Activated T-helper 1 cell treated with anti-CD3 and anti-CD28 coated beads, Interleukin-12 subunit alpha, Interleukin-12 subunit beta, Interleukin-2, Interleukin-4 antibody, amounts not matched to agents 30 ng/mL and 10 ng/mL and 1 ng/mL, durations not matched to agents 14 hours and 24 hours and 36 hours (primary cell): ENCODE measurements at regions of chr9 and their contacts with region 1.

Region 1: DNA sequence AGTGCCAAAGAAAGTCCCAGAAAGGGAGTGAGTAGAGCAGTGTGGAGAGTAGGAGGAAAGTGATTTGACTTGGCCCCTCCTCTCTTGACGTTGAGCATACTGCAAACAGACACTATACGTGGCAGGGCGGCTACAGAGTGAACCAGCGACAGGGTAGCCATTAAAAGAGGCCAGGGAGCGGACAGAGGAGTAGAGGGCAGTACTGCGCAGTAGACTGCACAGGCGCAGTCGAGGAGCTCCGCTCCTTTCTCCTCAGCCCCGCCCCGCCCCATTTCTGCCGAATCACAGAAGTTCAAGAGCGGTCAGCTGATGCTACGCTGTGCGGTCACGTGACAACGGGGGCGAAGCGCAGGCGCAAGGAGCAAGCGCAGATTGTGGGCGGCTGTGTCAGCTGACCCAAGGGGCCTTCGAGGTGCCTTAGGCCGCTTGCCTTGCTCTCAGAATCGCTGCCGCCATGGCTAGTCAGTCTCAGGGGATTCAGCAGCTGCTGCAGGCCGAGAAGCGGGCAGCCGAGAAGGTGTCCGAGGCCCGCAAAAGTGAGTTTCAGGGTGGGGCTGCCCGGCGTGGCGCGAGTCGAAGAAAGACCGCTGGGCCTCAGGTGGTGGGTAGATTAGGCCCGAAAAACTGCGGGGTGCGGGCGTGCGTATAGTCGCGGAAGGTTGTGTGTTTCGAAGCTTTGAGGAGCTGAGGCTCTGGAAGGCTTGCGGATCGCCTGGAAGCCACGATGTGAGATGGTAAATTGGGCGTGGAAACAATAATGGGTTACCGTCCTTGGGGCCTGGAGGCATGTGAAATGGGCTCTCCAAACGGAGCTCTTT is at the start of gene ATP6V1G1:
- DNase-seq: peak; percentile 99
- H3K4me3 Mint-ChIP-seq: peak within 1 kb of the TSS; percentile 97
- H3K27ac Mint-ChIP-seq: peak within 1 kb of the TSS; percentile 97
- H3K4me1 Mint-ChIP-seq: peaks cover 47% of the 10 kb centered on the region
- H3K27me3 Mint-ChIP-seq: peaks cover 6% of the 10 kb centered on the region
- total RNA-seq, gene ATP6V1G1: 57.2 and 61.0 TPM in 2 replicates

Region 2: GRCh38 chr9:114348906-114349482 is 238.6 kb before region 1 on chr9:
- intact Hi-C with region 1: loop called (anchors 1 kb)
- DNase-seq: peak; percentile 62
- H3K4me3 Mint-ChIP-seq: peak overlapping the region; percentile 72
- H3K27ac Mint-ChIP-seq: peak overlapping the region; percentile 97
- H3K4me1 Mint-ChIP-seq: peaks cover 56% of the 10 kb centered on the region
- H3K27me3 Mint-ChIP-seq: no peaks in the 10 kb centered on the region

Region 3: DNA sequence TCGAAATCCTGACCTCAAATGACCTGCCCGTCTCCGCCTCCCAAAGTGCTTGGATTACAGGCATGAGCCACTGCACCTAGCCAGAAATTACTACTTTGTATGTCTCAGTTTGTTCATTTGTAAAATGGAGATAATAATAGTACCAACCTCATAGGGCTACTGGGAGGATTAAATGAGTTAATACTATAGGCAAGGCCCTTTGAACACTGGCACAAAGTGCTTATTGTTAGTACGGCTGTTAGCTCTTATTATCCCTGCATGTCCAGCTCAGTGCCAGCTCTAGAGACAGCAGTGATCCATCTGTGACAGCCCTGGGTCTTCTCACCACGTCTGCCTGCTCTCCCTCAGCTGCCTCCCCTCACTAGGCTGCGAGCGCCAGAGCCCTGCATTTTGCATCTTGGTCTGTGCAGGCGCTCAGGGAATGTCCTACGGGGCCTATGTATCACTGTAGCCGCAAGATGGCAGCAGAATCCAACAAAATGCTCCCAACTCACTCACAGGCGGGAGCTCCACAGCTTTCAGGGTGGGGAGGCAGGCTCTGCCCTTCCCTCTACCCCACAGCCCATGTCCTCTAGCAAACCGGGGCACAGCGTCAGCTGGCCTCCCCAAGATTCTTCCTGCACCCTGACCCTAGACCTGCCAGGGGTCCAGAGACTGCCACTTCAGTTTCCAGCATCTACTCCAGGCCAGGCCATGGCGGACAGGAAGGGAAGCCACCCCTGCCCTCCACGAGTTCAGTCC is 182.1 kb before region 1 on chr9:
- intact Hi-C with region 1: loop called (anchors 1 kb)
- DNase-seq: peak; percentile 71
- H3K4me3 Mint-ChIP-seq: no peak overlapping the region
- H3K27ac Mint-ChIP-seq: no peak overlapping the region
- H3K4me1 Mint-ChIP-seq: peaks cover 6% of the 10 kb centered on the region
- H3K27me3 Mint-ChIP-seq: peaks cover 3% of the 10 kb centered on the region

Region 4: GRCh38 chr9:114505187-114506081 is 82.2 kb before region 1 on chr9 and contains the start of gene WHRN:
- intact Hi-C with region 1: loop called (anchors 1 kb)
- DNase-seq: peak; percentile 89
- H3K4me3 Mint-ChIP-seq: peak within 1 kb of the TSS; percentile 85
- H3K27ac Mint-ChIP-seq: peak within 1 kb of the TSS; percentile 79
- H3K4me1 Mint-ChIP-seq: peaks cover 19% of the 10 kb centered on the region
- H3K27me3 Mint-ChIP-seq: peaks cover 62% of the 10 kb centered on the region
- total RNA-seq, gene WHRN: 2.2 and 2.4 TPM in 2 replicates

Region 5: GRCh38 chr9:114653556-114654159 is 66.1 kb after region 1 on chr9:
- intact Hi-C with region 1: loop called (anchors 1 kb)
- DNase-seq: peak; percentile 76
- H3K4me3 Mint-ChIP-seq: no peak overlapping the region
- H3K27ac Mint-ChIP-seq: peak overlapping the region; percentile 54
- H3K4me1 Mint-ChIP-seq: peaks cover 21% of the 10 kb centered on the region
- H3K27me3 Mint-ChIP-seq: no peaks in the 10 kb centered on the region

Region 6: GRCh38 chr9:114919611-114920010 is 332.0 kb after region 1 on chr9:
- intact Hi-C with region 1: loop called (anchors 5 kb)
- DNase-seq: no peak
- H3K4me3 Mint-ChIP-seq: peak overlapping the region; percentile 63
- H3K27ac Mint-ChIP-seq: peak overlapping the region; percentile 64
- H3K4me1 Mint-ChIP-seq: peaks cover 94% of the 10 kb centered on the region
- H3K27me3 Mint-ChIP-seq: no peaks in the 10 kb centered on the region